ENCODE measurements at regions of chr6 and their contacts with region 1.

Region 1: GRCh38 chr6:80789912-80790570 is 683.6 kb downstream of the BCKDHB start:
- DNase-seq: no peak
- H3K4me3 ChIP-seq: no peak overlapping the region
- H3K27ac ChIP-seq: no peak overlapping the region
- H3K4me1 ChIP-seq: no peaks in the 10 kb centered on the region
- H3K27me3 ChIP-seq: no peaks in the 10 kb centered on the region
- CTCF ChIP-seq: no peak

Region 2: DNA sequence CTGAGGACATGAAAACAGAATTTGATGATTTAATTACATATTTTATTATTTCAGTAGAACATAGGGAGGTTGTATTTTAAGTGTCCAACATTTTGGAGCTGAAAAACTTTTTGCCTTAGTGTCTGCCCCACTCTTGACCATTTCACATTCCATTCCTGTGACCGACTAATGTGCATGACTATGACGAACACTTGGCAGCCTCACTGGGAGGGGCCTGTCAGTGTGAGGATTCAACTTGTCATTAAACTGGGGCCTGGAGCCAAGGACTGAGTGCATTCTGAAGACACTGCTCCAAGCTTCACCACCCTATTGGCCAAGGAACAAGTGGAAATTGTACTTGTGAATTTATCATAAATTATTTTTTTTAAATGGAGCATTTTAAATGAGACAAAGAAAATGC is 22.2 kb before region 1 on chr6:
- CTCF ChIA-PET with region 1: no interaction called
- dilution Hi-C with region 1: no loop called
- in situ Hi-C with region 1: no loop called
- intact Hi-C with region 1: no loop called
- DNase-seq: peak; percentile 57
- H3K4me3 ChIP-seq: no peak overlapping the region
- H3K27ac ChIP-seq: no peak overlapping the region
- H3K4me1 ChIP-seq: no peaks in the 10 kb centered on the region
- H3K27me3 ChIP-seq: peaks cover 2% of the 10 kb centered on the region
- CTCF ChIP-seq: no peak

Region 3: GRCh38 chr6:80860107-80860506 is 70.1 kb after region 1 on chr6:
- CTCF ChIA-PET with region 1: no interaction called
- dilution Hi-C with region 1: no loop called
- in situ Hi-C with region 1: no loop called
- intact Hi-C with region 1: no loop called
- DNase-seq: no peak
- H3K4me3 ChIP-seq: no peak overlapping the region
- H3K27ac ChIP-seq: no peak overlapping the region
- H3K4me1 ChIP-seq: no peaks in the 10 kb centered on the region
- H3K27me3 ChIP-seq: no peaks in the 10 kb centered on the region
- CTCF ChIP-seq: no peak

Region 4: DNA sequence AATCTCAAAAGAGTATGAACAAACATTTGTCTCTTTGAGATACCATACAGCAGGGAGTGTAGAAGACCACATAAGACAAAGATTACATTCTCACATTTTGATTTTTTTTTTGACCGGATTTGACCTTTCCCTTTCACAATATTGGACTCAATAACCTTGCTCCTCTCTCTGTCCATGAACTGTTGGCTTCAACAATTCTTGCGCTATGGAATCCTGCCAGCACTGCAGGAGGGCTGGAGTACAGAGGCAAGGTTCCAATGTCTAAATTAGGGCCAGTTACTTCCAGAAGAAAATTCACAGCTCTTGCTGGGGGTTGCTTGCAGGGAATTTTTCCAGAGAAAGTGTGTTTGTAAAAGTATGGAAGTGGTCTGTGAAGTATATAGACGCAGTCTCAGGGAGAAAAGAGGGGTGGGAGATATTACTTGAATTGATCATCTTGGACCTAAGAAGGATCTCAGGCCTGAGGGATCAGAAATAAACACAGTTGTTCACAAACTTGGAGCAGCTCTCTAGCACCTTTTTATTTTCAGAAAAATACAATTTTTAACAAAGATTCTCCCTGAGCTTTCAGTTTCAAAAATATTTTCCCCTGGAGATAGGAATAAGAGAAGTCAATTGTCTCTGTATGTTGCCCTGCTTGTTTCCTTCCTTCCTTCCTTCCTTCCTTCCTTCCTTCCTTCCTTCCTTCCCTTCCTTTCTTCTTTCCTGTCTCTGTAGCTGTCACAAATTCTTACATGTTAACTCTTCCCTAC is 82.3 kb after region 1 on chr6:
- CTCF ChIA-PET with region 1: no interaction called
- dilution Hi-C with region 1: loop called (anchors 5 kb)
- in situ Hi-C with region 1: no loop called
- intact Hi-C with region 1: no loop called
- DNase-seq: no peak
- H3K4me3 ChIP-seq: no peak overlapping the region
- H3K27ac ChIP-seq: no peak overlapping the region
- H3K4me1 ChIP-seq: no peaks in the 10 kb centered on the region
- H3K27me3 ChIP-seq: no peaks in the 10 kb centered on the region
- CTCF ChIP-seq: no peak